ENCODE measurements at regions of chr16 and their contacts with region 1.

Region 1: GRCh38 chr16:85055503-85056210 is 28.1 kb downstream of the KIAA0513 start:
- DNase-seq: peak; percentile 85
- H3K4me3 Mint-ChIP-seq: peak overlapping the region; percentile 37
- H3K27ac Mint-ChIP-seq: peak overlapping the region; percentile 80
- H3K4me1 Mint-ChIP-seq: peaks cover 35% of the 10 kb centered on the region
- H3K27me3 Mint-ChIP-seq: peaks cover 12% of the 10 kb centered on the region

Region 2: DNA sequence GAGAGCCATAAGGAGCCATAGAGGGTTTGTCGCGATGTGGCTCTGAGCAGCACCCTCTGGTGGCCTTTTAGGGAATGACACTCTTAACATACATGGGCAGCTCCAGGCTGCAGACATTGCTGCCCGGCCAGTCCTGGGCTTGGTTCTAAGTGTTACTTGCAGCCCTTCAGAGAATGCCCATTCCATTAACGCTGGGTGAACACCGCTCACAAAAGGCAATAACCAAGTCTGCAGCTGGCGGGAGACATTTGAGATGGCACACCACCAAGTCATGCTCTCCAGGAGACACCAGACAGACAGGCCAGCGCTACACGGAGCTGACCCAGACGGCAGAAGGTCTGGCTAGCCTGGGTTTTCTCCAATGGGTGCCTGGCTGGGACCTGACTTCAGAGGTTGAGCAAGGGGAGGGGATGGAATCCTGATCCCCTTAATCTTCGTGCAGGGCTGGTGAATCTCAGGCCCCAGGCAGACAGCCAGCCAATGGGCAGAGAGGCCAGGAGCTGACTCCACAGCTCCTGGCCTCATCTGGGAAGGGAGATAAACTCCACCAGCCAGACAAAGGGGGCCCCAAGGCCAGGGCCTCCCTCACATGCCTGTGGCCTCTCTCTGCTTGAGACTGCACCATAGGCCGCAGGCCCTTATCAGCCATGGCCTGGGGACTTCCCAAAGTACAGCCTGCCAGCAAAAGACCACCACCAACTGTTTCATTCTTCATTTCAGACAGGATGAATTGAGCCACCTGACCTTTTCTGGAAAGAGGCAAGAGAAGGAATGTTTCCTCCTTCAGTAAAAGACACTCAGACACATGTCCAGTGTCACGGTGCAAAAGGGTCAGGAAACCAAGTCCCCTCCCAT is 103.1 kb before region 1 on chr16:
- intact Hi-C with region 1: no loop called
- DNase-seq: peak; percentile 59
- H3K4me3 Mint-ChIP-seq: no peak overlapping the region
- H3K27ac Mint-ChIP-seq: no peak overlapping the region
- H3K4me1 Mint-ChIP-seq: no peaks in the 10 kb centered on the region
- H3K27me3 Mint-ChIP-seq: no peaks in the 10 kb centered on the region

Region 3: DNA sequence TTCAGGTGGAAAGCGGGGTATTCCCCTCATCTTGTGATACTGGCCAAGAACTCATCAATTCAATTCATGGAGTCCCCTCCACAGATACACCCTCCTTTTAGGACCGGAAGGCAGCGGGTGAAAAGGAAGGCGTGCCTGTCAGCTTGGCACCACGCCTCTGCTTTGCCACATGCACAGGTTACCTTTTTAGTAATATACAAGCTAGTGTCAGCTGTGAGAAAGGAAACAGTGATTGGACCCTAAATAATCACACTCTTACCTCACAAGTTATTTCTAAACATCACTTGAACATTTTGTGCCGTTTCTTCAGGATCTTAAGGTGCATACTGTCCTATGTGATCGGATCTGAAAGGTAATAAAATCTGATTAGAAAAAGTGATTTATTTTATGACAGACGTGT is 60.0 kb before region 1 on chr16:
- intact Hi-C with region 1: no loop called
- DNase-seq: no peak
- H3K4me3 Mint-ChIP-seq: no peak overlapping the region
- H3K27ac Mint-ChIP-seq: no peak overlapping the region
- H3K4me1 Mint-ChIP-seq: peaks cover 10% of the 10 kb centered on the region
- H3K27me3 Mint-ChIP-seq: no peaks in the 10 kb centered on the region

Region 4: GRCh38 chr16:85017151-85017550 is 38.5 kb before region 1 on chr16:
- intact Hi-C with region 1: loop called (anchors 2 kb)
- DNase-seq: no peak
- H3K4me3 Mint-ChIP-seq: no peak overlapping the region
- H3K27ac Mint-ChIP-seq: peak overlapping the region; percentile 30
- H3K4me1 Mint-ChIP-seq: peaks cover 9% of the 10 kb centered on the region
- H3K27me3 Mint-ChIP-seq: peaks cover 13% of the 10 kb centered on the region

Region 5: GRCh38 chr16:85027349-85027957 is 28.2 kb before region 1 on chr16 and contains the start of gene KIAA0513:
- intact Hi-C with region 1: loop called (anchors 1 kb)
- DNase-seq: peak; percentile 94
- H3K4me3 Mint-ChIP-seq: peak within 1 kb of the TSS; percentile 88
- H3K27ac Mint-ChIP-seq: peak within 1 kb of the TSS; percentile 96
- H3K4me1 Mint-ChIP-seq: peaks cover 33% of the 10 kb centered on the region
- H3K27me3 Mint-ChIP-seq: no peaks in the 10 kb centered on the region
- total RNA-seq, gene KIAA0513: 12.8 and 13.6 TPM in 2 replicates

Measured in activated T-helper 2 cell treated with anti-CD3 and anti-CD28 coated beads, Interferon-gamma antibody, Interleukin-2, Interleukin-4, amounts not matched to agents 10 μg/mL and 5 μg/mL and 100 μg/mL, durations not matched to agents 14 hours and 24 hours and 36 hours (primary cell).